Mucosa of descending colon (tissue), 3 donors: ENCODE measurements at regions of chr1 and their contacts with region 1.

Region 1: DNA sequence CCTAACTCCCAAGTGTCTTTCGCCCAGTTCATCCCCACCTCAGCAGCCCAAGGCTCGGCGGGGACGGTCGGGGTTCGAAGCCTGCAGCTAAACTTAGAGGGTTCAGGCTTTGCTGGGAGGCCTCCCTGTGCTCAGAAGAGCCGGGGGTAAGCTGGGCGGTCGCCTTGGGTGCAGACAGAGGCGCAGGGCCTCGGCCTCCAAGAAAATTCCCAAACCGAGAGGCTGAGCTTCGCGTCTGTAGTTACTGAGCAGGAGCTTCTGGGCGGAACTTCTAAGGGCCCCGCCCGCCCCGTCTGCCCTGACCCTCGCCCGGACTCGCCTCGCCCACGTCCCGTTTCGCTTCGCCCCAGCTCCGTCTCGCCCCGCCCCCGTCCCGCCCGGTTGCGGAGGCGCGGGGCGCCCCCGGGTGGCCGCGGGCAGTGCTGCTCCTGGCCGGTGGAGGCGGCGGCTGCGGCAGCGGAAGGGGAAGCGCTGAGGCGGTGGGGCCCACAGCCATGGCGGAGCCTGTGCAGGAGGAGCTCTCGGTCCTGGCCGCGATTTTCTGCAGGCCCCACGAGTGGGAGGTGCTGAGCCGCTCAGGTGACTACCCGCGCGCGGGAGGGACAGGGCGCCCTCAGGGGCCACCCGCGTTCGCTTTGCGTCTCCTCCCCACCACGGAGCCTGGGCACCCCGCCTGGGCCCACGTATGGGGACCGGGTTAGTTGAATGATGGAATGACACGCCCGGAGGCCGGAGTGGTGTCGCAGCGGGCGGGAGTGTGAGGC is at the start of gene RWDD3:
- DNase-seq: peak; percentile 96 to 98 (median 96)
- ATAC-seq: peak; percentile 98
- H3K4me3 ChIP-seq: peak within 1 kb of the TSS; percentile 76
- H3K4me1 ChIP-seq: peaks cover 10% of the 10 kb centered on the region
- CTCF ChIP-seq: peak; percentile 97
- total RNA-seq, gene RWDD3: 14.2 to 16.9 (median 15.5) TPM

Region 2: GRCh38 chr1:95084317-95085176 is 149.4 kb before region 1 on chr1:
- intact Hi-C with region 1: loop called in 1 of 2 experiments (anchors 10 kb)
- DNase-seq: peak in 1 of 3 donors; percentile 43
- ATAC-seq: peak; percentile 99
- H3K4me3 ChIP-seq: no peak overlapping the region
- H3K4me1 ChIP-seq: peaks cover 7% of the 10 kb centered on the region
- CTCF ChIP-seq: peak; percentile 33